Tibial artery (tissue), 4 donors: ENCODE measurements at regions of chr19 and their contacts with region 1.

Region 1: GRCh38 chr19:14073261-14073924 is 807 bp downstream of the MISP3 start:
- DNase-seq: peak; percentile 62 to 86
- H3K4me3 ChIP-seq: peak overlapping the region; percentile 62 to 73
- H3K27ac ChIP-seq: peak overlapping the region; percentile 88 to 92
- H3K4me1 ChIP-seq: peaks cover 0 to 40% (median 31%) of the 10 kb centered on the region in 4 donors
- H3K27me3 ChIP-seq: no peaks in the 10 kb centered on the region
- CTCF ChIP-seq: peak in 1 of 2 experiments; percentile 94

Region 2: DNA sequence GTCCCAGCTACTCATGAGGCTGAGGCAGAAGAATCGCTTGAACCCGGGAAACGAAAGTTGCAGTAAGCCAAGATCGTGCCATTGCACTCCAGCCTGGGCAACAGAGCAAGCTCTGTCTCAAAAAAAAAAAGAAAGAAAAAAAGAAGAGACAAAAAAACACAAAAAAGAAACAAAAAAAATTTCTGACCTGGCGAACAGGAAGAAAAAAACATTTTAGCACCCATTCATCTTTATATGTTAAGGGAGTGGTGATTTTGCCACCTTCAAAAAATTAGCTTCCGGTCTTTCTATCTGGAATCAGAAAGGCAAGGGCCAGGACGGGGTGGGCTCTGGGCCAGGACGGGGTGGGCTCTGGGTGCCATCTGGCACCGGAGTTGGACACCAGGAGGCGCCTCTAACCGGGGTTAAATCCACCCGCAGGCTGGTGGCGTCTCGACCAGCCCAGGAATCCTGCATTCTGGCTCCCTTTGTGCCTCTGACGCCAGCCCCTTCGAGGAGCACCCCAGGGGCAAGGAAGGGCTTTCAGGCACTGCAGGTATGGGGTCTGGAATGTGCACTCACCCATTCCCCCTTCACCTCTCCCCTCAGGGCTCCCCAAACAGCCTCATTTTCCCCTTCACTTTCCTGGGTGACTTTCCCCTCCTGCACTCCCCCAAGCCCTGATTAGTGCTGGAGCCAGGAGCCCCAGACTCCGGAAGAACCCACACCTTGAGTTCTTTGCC is 288.5 kb before region 1 on chr19:
- intact Hi-C with region 1: loop called (anchors 10 kb)
- DNase-seq: peak; percentile 72 to 91
- H3K4me3 ChIP-seq: no peak overlapping the region
- H3K27ac ChIP-seq: peak overlapping the region; percentile 63 to 92
- H3K4me1 ChIP-seq: peaks cover 5 to 63% (median 37%) of the 10 kb centered on the region in 4 donors
- H3K27me3 ChIP-seq: no peaks in the 10 kb centered on the region
- CTCF ChIP-seq: peak; percentile 69 to 72

Region 3: DNA sequence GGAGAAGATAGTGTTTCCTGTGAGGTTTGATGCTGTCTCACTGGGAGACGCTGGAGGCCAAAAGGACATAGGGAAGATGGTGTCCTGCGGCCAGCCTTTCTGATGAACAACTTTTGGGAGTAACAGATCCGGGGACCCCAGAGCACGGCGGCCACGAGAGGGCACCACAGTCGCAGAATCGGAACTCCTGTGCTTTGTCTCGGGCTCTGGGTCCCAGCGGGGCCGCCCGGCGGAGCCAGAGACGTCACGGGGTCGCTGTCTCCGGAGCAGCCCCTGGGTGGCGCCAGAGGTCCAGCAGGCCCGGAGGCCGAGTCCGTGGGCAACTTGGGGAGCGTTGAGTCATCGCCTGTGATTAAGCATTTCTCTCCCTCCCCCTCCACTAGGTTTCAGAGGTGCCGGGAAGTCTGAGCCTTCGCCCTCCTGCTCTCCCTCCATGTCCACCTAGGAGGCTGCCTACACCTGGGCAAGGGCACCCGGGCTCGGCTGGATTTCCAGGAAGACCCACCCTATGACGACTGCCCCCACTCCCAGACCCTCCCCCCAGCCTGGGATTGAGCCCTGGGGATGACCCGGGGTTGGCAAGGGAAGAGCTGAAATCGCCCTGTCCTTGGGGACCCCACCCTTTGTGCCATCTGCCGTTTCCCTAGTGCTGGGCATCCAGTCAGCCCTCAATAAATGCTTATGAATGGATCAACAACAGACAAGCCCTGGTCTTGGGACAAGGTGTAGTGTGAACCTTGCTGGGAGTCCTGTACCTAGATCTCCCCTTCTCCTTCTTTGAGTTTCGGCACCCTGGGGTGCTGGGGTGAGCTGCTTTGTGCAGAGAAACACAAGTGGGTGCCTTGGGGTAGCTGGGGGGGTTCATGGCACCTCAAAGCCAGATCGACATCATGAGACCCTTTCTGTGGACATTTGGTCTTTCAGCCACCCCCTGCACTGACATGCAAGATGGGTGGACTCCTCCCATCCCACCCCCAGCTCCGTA is 193.0 kb before region 1 on chr19:
- intact Hi-C with region 1: loop called (anchors 1 kb)
- DNase-seq: peak; percentile 98 to 99
- H3K4me3 ChIP-seq: peak overlapping the region; percentile 28 to 42
- H3K27ac ChIP-seq: peak overlapping the region; percentile 80 to 90
- H3K4me1 ChIP-seq: peaks cover 0 to 54% (median 15%) of the 10 kb centered on the region in 4 donors
- H3K27me3 ChIP-seq: no peaks in the 10 kb centered on the region
- CTCF ChIP-seq: peak; percentile 99 to 100

Region 4: DNA sequence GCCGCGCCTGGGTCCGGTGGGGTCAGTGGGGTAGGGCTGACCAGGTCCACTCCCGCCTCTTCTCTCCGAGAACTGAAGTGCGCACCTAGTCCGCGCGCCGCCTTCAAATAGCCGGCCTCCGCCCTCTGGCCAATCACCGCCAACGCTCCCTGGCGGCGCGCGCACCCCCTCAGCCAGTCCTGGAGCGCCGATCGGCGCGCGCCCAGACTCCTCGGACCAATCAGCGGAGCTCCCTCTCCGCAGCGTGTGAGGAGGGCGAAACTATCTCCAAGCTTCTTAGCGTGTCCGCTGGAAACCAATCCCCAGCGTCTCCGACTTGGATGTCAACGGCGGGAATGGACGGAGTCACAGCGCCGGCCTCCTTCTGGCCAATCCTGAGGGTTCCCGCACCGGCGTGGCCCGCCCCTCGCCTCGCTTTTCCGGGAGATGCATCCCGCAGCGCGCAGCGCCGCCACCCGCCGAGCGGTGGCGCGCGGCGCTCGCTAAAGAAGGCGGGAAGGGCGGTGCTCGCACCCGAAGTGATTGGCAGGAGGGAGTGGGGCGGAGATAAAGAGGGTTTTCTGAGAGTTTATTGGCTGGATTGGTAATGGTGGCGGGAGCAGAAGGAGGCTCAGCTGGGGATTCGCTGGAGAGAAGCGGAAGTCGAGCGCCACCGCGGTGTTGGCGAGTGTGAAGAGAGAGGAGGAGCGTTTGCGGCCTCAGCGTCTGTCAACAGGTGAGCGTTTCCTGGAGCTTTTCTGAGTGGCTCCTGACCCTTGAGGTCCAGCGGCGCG is 63.3 kb after region 1 on chr19 and contains the start of gene ASF1B:
- intact Hi-C with region 1: loop called (anchors 5 kb)
- DNase-seq: peak; percentile 99 to 100
- H3K4me3 ChIP-seq: peak within 1 kb of the TSS; percentile 67 to 84
- H3K27ac ChIP-seq: peak within 1 kb of the TSS; percentile 90 to 94
- H3K4me1 ChIP-seq: peaks cover 0 to 27% (median 21%) of the 10 kb centered on the region in 4 donors
- H3K27me3 ChIP-seq: no peaks in the 10 kb centered on the region
- CTCF ChIP-seq: peak; percentile 79 to 83